Activated B cell treated with CpG ODN at 0.5 μM for 24 hours (primary cell): ENCODE measurements at regions of chr9 and their contacts with region 1.

Region 1: GRCh38 chr9:103397868-103398600 is 402.9 kb downstream of the CYLC2 start:
- DNase-seq: no peak
- ATAC-seq: peak; percentile 70
- H3K4me3 Mint-ChIP-seq: no peak overlapping the region
- H3K27ac Mint-ChIP-seq: no peak overlapping the region
- H3K4me1 Mint-ChIP-seq: no peaks in the 10 kb centered on the region
- H3K27me3 Mint-ChIP-seq: no peaks in the 10 kb centered on the region
- CTCF ChIP-seq: no peak

Region 2: DNA sequence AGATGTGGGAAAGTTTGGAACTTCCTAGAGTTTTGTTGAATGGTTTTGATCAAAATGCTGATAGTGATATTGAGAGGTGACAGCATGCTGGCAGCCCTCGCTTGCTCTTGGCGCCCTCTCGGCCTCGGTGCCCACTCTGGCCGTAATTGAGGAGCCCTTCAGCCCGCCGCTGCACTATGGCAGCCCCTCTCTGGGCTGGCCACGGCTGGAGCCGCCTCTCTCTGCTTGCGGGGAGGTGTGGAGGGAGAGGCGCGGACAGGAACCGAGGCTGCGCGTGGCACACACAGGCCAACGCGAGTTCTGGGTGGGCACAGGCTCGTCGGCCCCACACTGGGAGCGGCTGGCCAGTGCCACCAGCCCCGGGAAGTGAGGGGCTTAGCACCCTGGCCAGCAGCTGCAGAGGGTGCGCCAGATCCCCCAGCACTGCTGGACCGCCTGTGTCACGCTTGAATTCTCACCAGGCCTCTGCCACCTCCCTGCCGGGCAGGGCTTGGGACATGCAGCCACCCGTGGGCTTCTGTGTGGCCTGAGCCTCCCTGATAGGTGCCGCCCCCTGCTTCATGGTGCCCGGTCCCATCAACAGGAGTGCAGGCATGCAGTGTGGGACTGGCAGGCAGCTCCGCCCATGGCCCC is 85.6 kb after region 1 on chr9:
- CTCF ChIA-PET with region 1: no interaction called
- POLR2A ChIA-PET with region 1: no interaction called
- intact Hi-C with region 1: no loop called
- DNase-seq: no peak
- ATAC-seq: no peak
- H3K4me3 Mint-ChIP-seq: no peak overlapping the region
- H3K27ac Mint-ChIP-seq: no peak overlapping the region
- H3K4me1 Mint-ChIP-seq: no peaks in the 10 kb centered on the region
- H3K27me3 Mint-ChIP-seq: no peaks in the 10 kb centered on the region
- CTCF ChIP-seq: no peak

Region 3: DNA sequence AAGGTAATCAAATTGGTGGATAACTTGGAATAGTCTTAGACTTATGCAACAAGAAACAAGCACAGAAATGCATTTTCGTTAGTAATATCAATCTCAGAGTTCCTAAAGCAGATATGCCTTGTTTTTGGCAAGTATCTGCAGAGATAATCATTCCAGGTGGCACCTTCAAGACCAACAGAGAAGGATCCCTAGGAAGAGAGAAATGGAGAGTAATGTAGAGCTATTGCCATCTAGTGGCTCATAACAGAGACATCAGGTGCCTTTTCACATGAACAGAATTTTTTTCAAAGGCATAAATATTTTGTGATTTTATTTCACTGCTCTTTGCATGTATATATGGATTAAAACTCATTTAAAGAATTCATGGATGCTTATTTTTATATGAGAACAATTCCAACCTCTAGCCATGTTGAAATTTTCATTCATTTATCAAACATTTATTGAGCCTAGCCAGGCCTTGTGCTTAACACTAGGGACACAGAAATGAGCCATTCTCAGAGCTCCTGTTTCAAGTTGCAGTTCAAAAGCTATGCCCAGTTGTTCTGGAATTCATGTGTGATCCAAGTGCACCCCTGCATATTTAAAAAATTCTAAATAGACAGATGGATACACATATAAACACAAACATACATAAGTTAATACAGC is 988.5 kb after region 1 on chr9:
- CTCF ChIA-PET with region 1: no interaction called
- POLR2A ChIA-PET with region 1: no interaction called
- intact Hi-C with region 1: loop called (anchors 2 kb)
- DNase-seq: no peak
- ATAC-seq: no peak
- H3K4me3 Mint-ChIP-seq: no peak overlapping the region
- H3K27ac Mint-ChIP-seq: no peak overlapping the region
- H3K4me1 Mint-ChIP-seq: no peaks in the 10 kb centered on the region
- H3K27me3 Mint-ChIP-seq: no peaks in the 10 kb centered on the region
- CTCF ChIP-seq: no peak

Region 4: GRCh38 chr9:104682642-104683041 is 1284.6 kb after region 1 on chr9:
- CTCF ChIA-PET with region 1: no interaction called
- POLR2A ChIA-PET with region 1: no interaction called
- intact Hi-C with region 1: loop called (anchors 2 kb)
- DNase-seq: no peak
- ATAC-seq: peak; percentile 25
- H3K4me3 Mint-ChIP-seq: no peak overlapping the region
- H3K27ac Mint-ChIP-seq: no peak overlapping the region
- H3K4me1 Mint-ChIP-seq: peaks cover 6% of the 10 kb centered on the region
- H3K27me3 Mint-ChIP-seq: peaks cover 3% of the 10 kb centered on the region
- CTCF ChIP-seq: no peak